ENCODE measurements at regions of chr12 and their contacts with region 1.

Region 1: DNA sequence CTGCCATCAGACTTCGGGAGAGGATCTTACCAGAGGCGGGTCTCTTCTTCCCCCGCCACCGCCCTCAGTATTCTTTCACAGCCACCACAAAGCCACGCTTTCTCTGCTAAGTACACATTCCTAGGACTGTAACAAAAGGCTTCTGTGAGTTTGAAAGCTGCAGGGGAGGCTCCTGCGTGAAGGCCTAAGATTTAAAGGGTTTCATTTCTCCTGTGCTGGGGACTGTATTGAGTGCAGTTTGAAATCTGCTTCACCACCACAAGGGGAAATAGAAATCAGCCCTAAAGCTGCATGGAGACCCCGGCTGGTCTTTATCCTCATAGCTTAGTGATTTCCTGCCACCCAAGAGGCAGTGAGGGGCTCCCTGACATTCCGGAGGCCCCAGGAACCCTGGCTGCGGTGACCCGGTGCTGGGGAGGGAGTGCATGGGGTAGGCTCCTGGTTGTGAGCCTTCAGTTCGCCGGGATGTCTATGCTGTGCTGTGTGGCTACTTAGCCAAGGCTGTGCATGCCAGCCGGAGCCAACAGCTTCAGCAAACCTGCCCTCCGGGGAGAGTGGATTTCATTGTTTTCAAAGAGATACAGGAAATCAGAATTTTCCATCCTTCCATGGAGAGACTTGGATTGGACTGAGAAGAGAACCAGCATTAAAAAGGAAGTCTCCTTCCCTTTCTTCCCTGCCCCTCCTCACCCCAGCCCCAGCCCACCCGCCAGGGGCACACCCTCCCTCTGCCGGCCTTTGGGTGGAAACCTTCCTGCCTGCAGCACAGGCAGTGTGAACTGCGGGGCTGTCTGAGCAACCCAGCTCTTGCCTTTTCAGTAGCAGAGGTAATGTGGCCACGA is 163.3 kb downstream of the ETV6 start:
- DNase-seq: peak; percentile 45
- ATAC-seq: peak; percentile 77
- H3K4me3 Mint-ChIP-seq: peak overlapping the region; percentile 33
- H3K27ac Mint-ChIP-seq: peak overlapping the region; percentile 97
- H3K4me1 Mint-ChIP-seq: peaks cover 74% of the 10 kb centered on the region
- H3K27me3 Mint-ChIP-seq: no peaks in the 10 kb centered on the region
- CTCF ChIP-seq: no peak

Region 2: GRCh38 chr12:11855983-11856374 is 43.2 kb after region 1 on chr12:
- CTCF ChIA-PET with region 1: interaction called, 11 read pairs
- POLR2A ChIA-PET with region 1: interaction called, 3 read pairs
- DNase-seq: no peak
- ATAC-seq: peak; percentile 70
- H3K4me3 Mint-ChIP-seq: peak overlapping the region; percentile 32
- H3K27ac Mint-ChIP-seq: peak overlapping the region; percentile 98
- H3K4me1 Mint-ChIP-seq: peaks cover 82% of the 10 kb centered on the region
- H3K27me3 Mint-ChIP-seq: no peaks in the 10 kb centered on the region
- CTCF ChIP-seq: no peak

Region 3: DNA sequence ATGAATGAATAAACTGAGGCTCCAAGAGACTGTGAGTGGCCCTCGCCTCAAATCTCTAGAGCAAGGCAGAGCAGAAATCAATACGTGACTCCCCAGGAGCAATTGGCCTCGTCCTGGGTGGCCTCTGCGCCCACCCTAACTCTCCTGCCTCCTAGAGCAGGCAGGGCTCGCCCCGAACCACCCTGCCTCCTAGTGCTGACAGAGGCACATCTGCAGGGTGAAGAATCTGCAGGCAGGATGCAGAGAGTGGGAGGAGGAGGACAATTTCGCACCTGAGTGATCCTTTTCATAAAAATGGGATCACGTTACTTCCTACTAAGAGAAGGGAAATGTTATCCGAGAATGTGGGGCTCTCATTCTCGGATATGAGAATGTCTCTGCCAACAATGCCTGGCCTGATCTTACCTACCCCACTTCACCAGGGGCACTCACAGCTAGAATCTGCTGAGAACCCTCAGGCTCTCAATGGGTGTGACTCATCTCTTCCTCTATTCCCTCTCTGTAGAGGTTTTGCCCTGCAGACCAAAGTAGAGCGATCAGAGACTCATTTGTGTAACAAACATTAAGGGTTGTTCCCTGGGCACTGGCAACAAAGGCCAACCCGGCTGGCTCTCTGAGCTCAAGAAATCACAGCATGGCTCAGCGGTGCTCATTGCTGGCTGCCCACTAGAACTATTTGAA is 196.3 kb after region 1 on chr12:
- CTCF ChIA-PET with region 1: interaction called, 10 read pairs
- POLR2A ChIA-PET with region 1: no interaction called
- DNase-seq: peak; percentile 46
- ATAC-seq: peak; percentile 89
- H3K4me3 Mint-ChIP-seq: peak overlapping the region; percentile 28; the same call in 1 of the 2 replicates
- H3K27ac Mint-ChIP-seq: peak overlapping the region; percentile 85
- H3K4me1 Mint-ChIP-seq: peaks cover 49% of the 10 kb centered on the region
- H3K27me3 Mint-ChIP-seq: no peaks in the 10 kb centered on the region
- CTCF ChIP-seq: no peak

Region 4: DNA sequence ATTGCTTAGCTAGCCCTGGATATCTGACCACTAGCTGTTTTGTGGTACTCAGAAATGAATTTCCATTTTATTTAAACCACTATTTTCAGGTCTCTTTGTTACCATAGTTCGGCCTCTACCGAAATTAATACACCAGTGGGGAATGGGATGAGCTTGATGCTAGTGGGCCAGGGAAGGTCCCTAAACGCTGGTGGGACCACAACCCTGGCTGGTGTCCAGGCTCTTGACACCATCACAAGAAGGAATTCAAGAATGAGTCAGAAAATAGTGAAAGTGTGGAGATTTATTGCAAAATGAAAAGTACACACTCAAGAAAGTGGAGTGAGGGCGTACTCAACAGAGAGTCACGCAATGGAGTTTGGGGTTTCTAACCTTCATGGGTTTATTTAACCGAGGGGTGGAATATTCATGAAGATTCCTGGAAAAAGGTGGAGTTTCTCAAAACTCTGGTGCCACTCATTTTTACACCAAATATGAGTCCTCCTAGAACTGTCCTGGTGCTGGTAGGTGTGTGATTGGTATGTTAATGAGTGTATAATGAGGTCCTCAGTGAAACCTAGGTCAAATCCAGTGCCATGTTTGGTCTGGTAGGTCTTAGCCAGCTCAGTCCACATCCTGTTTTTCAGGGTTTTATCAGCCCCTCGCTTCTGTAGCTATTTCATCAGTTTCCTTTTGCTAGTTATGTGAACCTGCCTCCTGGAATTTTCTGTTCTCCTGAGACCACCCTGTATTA is 492.9 kb after region 1 on chr12:
- CTCF ChIA-PET with region 1: no interaction called
- POLR2A ChIA-PET with region 1: no interaction called
- DNase-seq: no peak
- ATAC-seq: no peak
- H3K4me3 Mint-ChIP-seq: no peak overlapping the region
- H3K27ac Mint-ChIP-seq: no peak overlapping the region
- H3K4me1 Mint-ChIP-seq: no peaks in the 10 kb centered on the region
- H3K27me3 Mint-ChIP-seq: no peaks in the 10 kb centered on the region
- CTCF ChIP-seq: no peak

Measured in WTC11 (cell line).